PC-3 (cell line): ENCODE measurements at regions of chr21 and their contacts with region 1.

Region 1: GRCh38 chr21:38798481-38798882 is 7.2 kb upstream of the ETS2 start:
- DNase-seq: peak; percentile 96
- ATAC-seq: peak; percentile 51
- H3K4me3 ChIP-seq: no peak overlapping the region
- H3K27ac ChIP-seq: peak overlapping the region; percentile 95
- H3K4me1 ChIP-seq: peaks cover 81% of the 10 kb centered on the region
- H3K27me3 ChIP-seq: no peaks in the 10 kb centered on the region
- CTCF ChIP-seq: no peak

Region 2: GRCh38 chr21:38787461-38788274 is 10.8 kb before region 1 on chr21:
- CTCF ChIA-PET with region 1: interaction called, 5 read pairs
- POLR2A ChIA-PET with region 1: interaction called, 4 read pairs
- intact Hi-C with region 1: loop called (anchors 1 kb)
- DNase-seq: peak; percentile 99
- ATAC-seq: peak; percentile 99
- H3K4me3 ChIP-seq: peak overlapping the region; percentile 54
- H3K27ac ChIP-seq: peak overlapping the region; percentile 96
- H3K4me1 ChIP-seq: peaks cover 27% of the 10 kb centered on the region
- H3K27me3 ChIP-seq: no peaks in the 10 kb centered on the region
- CTCF ChIP-seq: no peak